Activated T-helper 1 cell treated with anti-CD3 and anti-CD28 coated beads, Interleukin-12 subunit alpha, Interleukin-12 subunit beta, Interleukin-2, Interleukin-4 antibody, amounts not matched to agents 30 ng/mL and 10 ng/mL and 1 ng/mL, durations not matched to agents 14 hours and 24 hours and 36 hours (primary cell): ENCODE measurements at regions of chr13 and their contacts with region 1.

Region 1: DNA sequence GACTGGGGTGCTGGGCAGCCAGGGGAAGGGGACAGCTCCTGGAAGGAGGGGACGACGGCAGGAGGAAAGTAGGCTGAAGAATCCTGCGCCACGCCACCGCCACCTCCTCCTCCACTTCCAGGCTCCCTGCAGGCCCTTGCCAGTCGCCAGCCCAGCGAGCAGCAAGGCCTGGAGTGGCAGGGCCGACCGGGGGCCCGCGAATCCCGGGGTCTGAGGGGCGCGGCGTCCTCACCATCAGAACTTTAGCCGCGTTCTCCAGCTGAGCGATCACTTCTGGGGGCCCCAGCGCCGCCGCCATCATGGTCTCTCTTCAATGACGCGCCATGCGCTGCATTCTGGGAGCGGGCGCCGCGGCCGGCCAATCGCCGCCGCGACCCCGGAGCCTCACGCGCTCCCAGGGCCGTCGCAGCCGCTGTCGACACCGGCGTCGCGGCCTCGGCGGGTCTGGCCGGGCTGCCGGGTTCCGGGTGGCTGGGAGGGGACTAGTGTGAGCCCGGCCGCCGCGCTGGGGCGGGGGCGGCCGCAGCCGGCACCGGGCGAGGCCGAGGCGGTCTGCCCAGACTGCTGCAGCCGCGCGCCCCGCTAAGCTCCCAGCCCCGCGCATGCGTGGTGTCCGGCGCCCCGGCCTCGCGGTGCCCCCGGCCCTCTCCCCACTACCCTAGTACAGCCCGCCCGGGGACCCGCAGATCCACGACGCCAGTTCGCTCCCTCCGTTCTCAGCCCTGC is at the start of gene XPO4:
- DNase-seq: peak; percentile 80
- H3K4me3 Mint-ChIP-seq: peak within 1 kb of the TSS; percentile 99
- H3K27ac Mint-ChIP-seq: peak within 1 kb of the TSS; percentile 94
- H3K4me1 Mint-ChIP-seq: peaks cover 32% of the 10 kb centered on the region
- H3K27me3 Mint-ChIP-seq: peaks cover 6% of the 10 kb centered on the region
- total RNA-seq, gene XPO4: 33.5 and 34.1 TPM in 2 replicates

Region 2: DNA sequence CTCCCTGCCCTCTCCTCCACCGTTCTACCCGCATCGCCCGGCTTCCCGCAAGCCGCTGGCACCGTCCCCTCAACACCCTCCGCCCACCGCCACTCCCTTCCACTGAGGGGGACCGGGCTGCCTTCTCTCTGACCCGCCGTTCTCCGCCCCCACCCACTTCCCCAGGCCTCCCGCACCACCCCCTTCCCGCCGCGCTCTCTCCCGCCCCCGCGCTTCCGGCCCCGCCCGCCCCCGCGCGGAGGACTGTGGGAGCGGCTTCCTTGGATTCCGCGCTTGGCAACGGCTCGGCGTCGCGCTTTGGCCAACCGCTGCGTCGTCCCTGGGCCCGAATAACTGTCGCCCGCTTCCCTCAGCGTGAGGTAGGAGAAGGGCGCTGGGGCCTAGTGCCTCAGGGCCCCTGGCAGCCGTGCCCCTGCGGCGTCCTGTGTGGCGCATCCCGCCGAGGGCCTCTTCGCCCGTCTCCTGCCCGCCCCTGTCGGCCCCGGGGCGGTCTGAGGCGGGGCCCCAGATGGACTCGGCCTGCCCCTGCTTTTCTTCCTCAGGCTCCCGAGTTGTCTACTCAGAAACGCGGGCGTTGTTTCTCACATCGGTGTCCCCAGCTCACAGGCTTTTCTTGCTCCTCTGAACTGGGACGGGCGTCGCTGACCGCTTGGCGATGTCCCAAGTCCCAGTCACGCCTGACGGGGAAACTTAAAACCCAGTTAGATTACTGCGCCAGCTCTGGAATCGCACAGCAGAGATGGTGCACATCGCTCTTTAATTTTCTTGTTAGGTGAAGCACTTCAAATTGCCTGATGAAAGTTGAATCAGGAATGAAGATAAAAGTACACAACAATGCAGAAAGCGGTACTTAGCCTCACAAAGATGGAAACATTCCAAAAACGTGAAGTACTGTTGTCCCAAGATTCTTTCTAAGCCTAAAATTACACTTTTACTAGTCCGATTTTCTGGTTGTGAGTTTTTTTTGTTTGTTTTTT is 335.4 kb before region 1 on chr13 and contains the start of gene IFT88:
- intact Hi-C with region 1: loop called (anchors 2 kb)
- DNase-seq: peak; percentile 85
- H3K4me3 Mint-ChIP-seq: peak within 1 kb of the TSS; percentile 88
- H3K27ac Mint-ChIP-seq: peak within 1 kb of the TSS; percentile 88
- H3K4me1 Mint-ChIP-seq: peaks cover 27% of the 10 kb centered on the region
- H3K27me3 Mint-ChIP-seq: no peaks in the 10 kb centered on the region
- total RNA-seq, gene IFT88: 1.5 TPM in 2 replicates

Region 3: GRCh38 chr13:21595546-21595822 is 692.9 kb after region 1 on chr13:
- intact Hi-C with region 1: no loop called
- DNase-seq: no peak
- H3K4me3 Mint-ChIP-seq: no peak overlapping the region
- H3K27ac Mint-ChIP-seq: no peak overlapping the region
- H3K4me1 Mint-ChIP-seq: peaks cover 6% of the 10 kb centered on the region
- H3K27me3 Mint-ChIP-seq: no peaks in the 10 kb centered on the region